CD8-positive, alpha-beta memory T cell (primary cell): ENCODE measurements at regions of chr7 and their contacts with region 1.

Region 1: DNA sequence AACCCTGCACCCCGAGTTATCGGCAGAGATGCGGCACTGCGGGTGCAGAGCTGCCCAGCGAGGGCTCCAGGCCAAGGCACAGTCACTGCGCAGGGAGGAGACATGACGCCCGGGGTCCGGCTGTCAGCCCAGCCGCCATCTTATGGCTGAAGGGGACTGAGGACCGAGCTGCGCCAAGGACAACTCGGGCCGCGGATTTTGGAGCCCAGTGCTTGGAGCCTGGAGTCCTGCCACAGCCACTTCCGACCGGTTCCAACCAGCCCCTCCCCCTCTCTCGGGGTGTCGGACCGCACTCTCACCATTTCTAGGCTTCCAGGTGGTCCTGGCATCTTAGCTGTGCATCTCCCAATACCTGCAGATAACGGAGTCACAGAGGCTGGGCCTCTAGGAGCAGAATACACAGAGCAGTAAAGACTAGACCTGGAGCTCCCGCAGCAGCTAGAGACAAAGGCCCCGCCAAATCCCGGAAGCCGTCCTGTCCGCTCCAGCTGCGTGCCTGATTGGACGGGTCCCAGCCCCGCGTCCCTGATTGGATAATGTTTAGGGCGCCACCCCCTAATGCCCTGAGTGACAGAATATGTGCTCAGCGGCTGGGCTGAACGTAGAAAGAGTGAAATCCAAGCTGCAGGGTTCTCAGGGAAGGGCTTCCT is at the start of gene ZNF680:
- DNase-seq: peak; percentile 79 to 92 (median 87)
- H3K4me3 ChIP-seq: peak within 1 kb of the TSS; percentile 90
- H3K4me3 Mint-ChIP-seq: peak within 1 kb of the TSS; percentile 96 to 100 (median 100)
- H3K27ac ChIP-seq: peak within 1 kb of the TSS; percentile 77
- H3K27ac Mint-ChIP-seq: peak within 1 kb of the TSS; percentile 88 to 100 (median 98)
- H3K4me1 ChIP-seq: peaks cover 4% of the 10 kb centered on the region
- H3K4me1 Mint-ChIP-seq: peaks cover 33 to 44% (median 44%) of the 10 kb centered on the region in 3 donors
- H3K27me3 ChIP-seq: no peaks in the 10 kb centered on the region
- H3K27me3 Mint-ChIP-seq: peaks cover 0 to 3% of the 10 kb centered on the region in 2 donors
- total RNA-seq, gene ZNF680: 9.2 to 11.1 TPM

Region 2: DNA sequence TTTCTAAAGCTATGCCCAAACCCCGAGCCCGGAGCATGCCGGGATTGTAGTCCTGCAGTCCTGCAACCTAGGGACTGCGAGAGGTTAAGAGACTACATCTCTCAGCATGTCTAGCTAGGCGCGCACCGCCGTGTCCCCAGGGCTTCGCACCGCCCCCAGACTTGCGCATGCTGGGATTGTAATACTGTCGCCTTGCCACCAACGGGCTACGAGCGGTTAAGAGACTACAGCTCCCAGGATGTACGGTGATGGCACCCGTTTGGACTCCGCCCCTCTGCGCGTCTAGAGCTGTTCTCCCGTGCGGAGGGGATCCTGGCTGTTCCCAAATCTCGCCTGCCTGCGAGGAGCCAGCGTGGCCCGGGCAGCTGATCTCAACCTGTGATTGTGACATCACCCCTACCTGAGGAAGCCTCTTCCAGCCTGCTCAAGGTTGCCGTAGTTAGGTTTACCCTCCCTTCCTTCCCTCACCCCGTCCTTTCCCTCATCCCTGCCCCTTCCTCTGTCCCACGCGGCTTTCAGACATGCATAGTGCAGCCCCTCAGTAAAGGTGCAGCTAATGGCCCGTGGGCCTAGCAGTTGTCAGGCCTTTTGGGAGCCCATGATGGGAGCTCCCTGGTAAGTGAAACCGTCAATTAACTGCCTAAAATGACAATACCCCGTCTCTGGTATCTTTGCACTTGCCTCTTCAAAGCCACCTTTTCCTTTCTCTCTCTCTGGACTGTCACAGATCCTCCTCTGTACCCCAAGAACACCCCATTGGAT is 255.3 kb before region 1 on chr7:
- CTCF ChIA-PET with region 1: interaction called, 4 read pairs
- POLR2A ChIA-PET with region 1: interaction called, 15 read pairs
- DNase-seq: peak; percentile 89 to 96 (median 92)
- H3K4me3 ChIP-seq: peak overlapping the region; percentile 81
- H3K4me3 Mint-ChIP-seq: peak overlapping the region; percentile 88 to 99 (median 97)
- H3K27ac ChIP-seq: peak overlapping the region; percentile 74
- H3K27ac Mint-ChIP-seq: peak overlapping the region; percentile 59 to 100 (median 98)
- H3K4me1 ChIP-seq: peaks cover 12% of the 10 kb centered on the region
- H3K4me1 Mint-ChIP-seq: peaks cover 17 to 28% (median 27%) of the 10 kb centered on the region in 3 donors
- H3K27me3 ChIP-seq: no peaks in the 10 kb centered on the region
- H3K27me3 Mint-ChIP-seq: peaks cover 0 to 1% of the 10 kb centered on the region in 2 donors

Region 3: GRCh38 chr7:64313740-64314491 is 248.8 kb before region 1 on chr7 and contains the start of gene ZNF736:
- CTCF ChIA-PET with region 1: no interaction called
- POLR2A ChIA-PET with region 1: interaction called, 12 read pairs
- DNase-seq: peak; percentile 80 to 94 (median 86)
- H3K4me3 ChIP-seq: peak within 1 kb of the TSS; percentile 98
- H3K4me3 Mint-ChIP-seq: peak within 1 kb of the TSS; percentile 92 to 99 (median 99)
- H3K27ac ChIP-seq: peak within 1 kb of the TSS; percentile 85
- H3K27ac Mint-ChIP-seq: peak within 1 kb of the TSS; percentile 89 to 99 (median 98)
- H3K4me1 ChIP-seq: peaks cover 23% of the 10 kb centered on the region
- H3K4me1 Mint-ChIP-seq: peaks cover 34 to 53% (median 39%) of the 10 kb centered on the region in 3 donors
- H3K27me3 ChIP-seq: no peaks in the 10 kb centered on the region
- H3K27me3 Mint-ChIP-seq: no peaks in the 10 kb centered on the region
- total RNA-seq, gene ZNF736: 22.8 to 24.1 TPM

Region 4: GRCh38 chr7:64516451-64516850 is 46.3 kb before region 1 on chr7:
- CTCF ChIA-PET with region 1: no interaction called
- POLR2A ChIA-PET with region 1: no interaction called
- DNase-seq: no peak
- H3K4me3 ChIP-seq: no peak overlapping the region
- H3K4me3 Mint-ChIP-seq: no peak overlapping the region
- H3K27ac ChIP-seq: no peak overlapping the region
- H3K27ac Mint-ChIP-seq: no peak overlapping the region
- H3K4me1 ChIP-seq: no peaks in the 10 kb centered on the region
- H3K4me1 Mint-ChIP-seq: no peaks in the 10 kb centered on the region
- H3K27me3 ChIP-seq: no peaks in the 10 kb centered on the region
- H3K27me3 Mint-ChIP-seq: no peaks in the 10 kb centered on the region

Region 5: DNA sequence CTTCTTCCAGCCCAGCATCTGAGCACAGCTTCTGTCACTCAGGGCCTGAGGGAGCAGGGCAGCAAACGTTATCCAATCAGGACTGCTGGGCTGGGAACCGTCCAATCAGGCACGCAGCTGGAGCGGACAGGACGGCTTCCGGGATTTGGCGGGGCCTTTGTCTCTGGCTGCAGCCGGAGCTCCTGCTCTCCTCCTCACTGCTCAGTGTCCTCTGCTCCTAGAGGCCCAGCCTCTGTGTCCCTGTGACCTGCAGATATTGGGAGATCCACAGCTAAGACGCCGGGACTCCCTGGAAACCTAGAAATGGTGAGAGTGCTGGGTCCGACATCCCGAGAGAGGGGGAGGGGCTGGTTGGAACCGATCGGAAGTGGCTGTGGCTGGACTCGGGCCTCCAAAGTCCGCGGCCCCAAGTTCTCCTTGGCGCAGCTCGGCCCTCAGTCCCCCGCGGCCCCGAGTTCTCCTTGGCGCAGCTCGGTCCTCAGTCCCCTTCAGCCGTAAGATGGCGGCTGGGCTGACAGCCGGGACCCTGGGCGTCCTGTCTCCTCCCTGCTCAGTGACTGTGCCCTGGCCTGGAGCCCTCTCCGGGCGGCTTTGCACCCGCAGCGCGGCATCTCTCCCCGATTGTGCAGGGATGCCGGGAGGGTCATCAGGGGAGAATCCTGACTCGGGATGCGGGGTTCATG is 103.4 kb after region 1 on chr7 and contains the start of gene ZNF107:
- CTCF ChIA-PET with region 1: no interaction called
- POLR2A ChIA-PET with region 1: interaction called, 34 read pairs
- DNase-seq: peak; percentile 74 to 94 (median 86)
- H3K4me3 ChIP-seq: peak within 1 kb of the TSS; percentile 99
- H3K4me3 Mint-ChIP-seq: peak within 1 kb of the TSS; percentile 94 to 99 (median 97)
- H3K27ac ChIP-seq: peak within 1 kb of the TSS; percentile 88
- H3K27ac Mint-ChIP-seq: peak within 1 kb of the TSS; percentile 96 to 100 (median 97)
- H3K4me1 ChIP-seq: peaks cover 17% of the 10 kb centered on the region
- H3K4me1 Mint-ChIP-seq: peaks cover 62 to 84% (median 73%) of the 10 kb centered on the region in 3 donors
- H3K27me3 ChIP-seq: no peaks in the 10 kb centered on the region
- H3K27me3 Mint-ChIP-seq: no peaks in the 10 kb centered on the region
- total RNA-seq, gene ZNF107: 13.5 to 14.2 TPM